Activated CD4-positive, alpha-beta memory T cell treated with anti-CD3 and anti-CD28 coated beads, Interleukin-2, amount 10 ng/mL, durations not matched to agents 7 days and 5 days (primary cell): ENCODE measurements at regions of chr19 and their contacts with region 1.

Region 1: DNA sequence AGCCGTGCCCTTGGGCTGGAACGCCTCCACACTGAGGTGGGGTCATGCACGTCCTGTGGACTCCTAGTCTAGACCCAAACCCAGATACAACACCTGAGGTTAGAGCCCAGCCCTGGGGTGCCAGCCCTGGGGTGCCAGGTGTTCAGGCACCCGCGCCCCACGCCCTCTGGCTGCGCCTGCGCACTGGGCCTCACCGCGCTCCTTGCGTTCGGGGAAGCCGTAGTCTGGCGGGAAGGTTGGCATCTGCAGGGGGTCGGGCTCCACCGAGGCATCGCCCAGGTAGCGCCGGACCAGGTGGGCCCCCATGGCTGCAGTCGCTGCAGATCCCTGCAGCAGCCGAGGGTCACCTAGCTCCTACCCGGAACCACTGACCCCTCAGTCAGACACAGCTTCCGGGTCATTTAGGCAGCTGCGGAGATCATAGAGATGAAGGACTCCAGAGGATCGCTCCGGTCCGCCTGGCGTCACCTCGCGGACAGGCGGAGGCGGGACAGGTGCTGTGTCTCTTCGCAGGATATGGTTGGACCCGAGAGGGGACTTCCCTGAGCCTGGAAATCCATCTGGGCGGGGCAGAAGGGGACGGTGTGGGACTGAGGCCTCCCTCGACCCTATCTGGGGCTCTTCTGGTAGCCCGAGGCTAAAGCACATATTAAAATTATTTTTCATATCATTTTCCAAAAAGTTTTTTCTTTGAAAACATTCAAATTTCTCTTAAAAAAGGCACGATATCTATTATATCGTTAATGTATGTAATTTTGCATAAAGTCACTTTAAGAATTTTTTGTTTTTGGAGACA is at the start of gene NDUFB7:
- DNase-seq: peak; percentile 92
- H3K4me3 Mint-ChIP-seq: peak within 1 kb of the TSS; percentile 96
- H3K27ac Mint-ChIP-seq: peak within 1 kb of the TSS; percentile 83
- H3K4me1 Mint-ChIP-seq: peaks cover 47% of the 10 kb centered on the region
- H3K27me3 Mint-ChIP-seq: no peaks in the 10 kb centered on the region
- total RNA-seq, gene NDUFB7: 91.6 to 93.0 TPM

Region 2: DNA sequence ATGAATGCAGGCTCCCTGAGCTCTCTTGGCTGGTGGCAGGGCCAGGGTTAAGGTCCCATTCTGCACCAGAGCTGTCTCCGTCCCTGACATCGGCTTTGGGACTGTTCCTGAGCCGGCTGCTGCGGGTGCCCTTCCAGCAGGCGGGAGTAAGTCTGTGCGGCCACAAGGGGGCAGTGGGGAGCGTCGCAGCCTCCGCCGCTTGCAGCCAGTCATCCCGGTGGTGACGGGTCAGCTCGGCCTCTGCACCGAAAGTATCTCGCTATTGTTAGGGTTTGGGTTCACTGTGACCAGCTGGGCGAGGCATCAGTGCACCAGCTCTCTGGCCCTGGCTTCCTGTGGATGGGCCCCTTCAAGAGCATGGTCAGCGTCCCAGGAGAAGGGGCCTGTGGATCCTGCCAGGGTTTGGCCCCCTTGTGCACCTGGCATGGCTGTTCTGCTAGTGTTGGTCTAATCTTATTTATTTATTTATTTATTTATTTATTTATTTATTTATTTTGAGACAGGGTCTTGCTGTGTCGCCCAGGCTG is 15.2 kb before region 1 on chr19:
- CTCF ChIA-PET with region 1: interaction called, 38 read pairs
- POLR2A ChIA-PET with region 1: no interaction called
- DNase-seq: peak; percentile 73
- H3K4me3 Mint-ChIP-seq: no peak overlapping the region
- H3K27ac Mint-ChIP-seq: no peak overlapping the region
- H3K4me1 Mint-ChIP-seq: peaks cover 24% of the 10 kb centered on the region
- H3K27me3 Mint-ChIP-seq: no peaks in the 10 kb centered on the region

Region 3: GRCh38 chr19:14682084-14682483 is 110.2 kb after region 1 on chr19:
- CTCF ChIA-PET with region 1: interaction called, 302 read pairs
- POLR2A ChIA-PET with region 1: interaction called, 10 read pairs
- DNase-seq: no peak
- H3K4me3 Mint-ChIP-seq: no peak overlapping the region
- H3K27ac Mint-ChIP-seq: no peak overlapping the region
- H3K4me1 Mint-ChIP-seq: no peaks in the 10 kb centered on the region
- H3K27me3 Mint-ChIP-seq: no peaks in the 10 kb centered on the region

Region 4: GRCh38 chr19:14689598-14690503 is 118.0 kb after region 1 on chr19 and contains the start of gene ZNF333:
- CTCF ChIA-PET with region 1: interaction called, 302 read pairs
- POLR2A ChIA-PET with region 1: interaction called, 16 read pairs
- DNase-seq: peak; percentile 99
- H3K4me3 Mint-ChIP-seq: peak within 1 kb of the TSS; percentile 92
- H3K27ac Mint-ChIP-seq: peak within 1 kb of the TSS; percentile 98
- H3K4me1 Mint-ChIP-seq: peaks cover 22% of the 10 kb centered on the region
- H3K27me3 Mint-ChIP-seq: no peaks in the 10 kb centered on the region
- total RNA-seq, gene ZNF333: 11.7 to 12.1 TPM